Caco-2 (cell line): ENCODE measurements at regions of chr5 and their contacts with region 1.

Region 1: DNA sequence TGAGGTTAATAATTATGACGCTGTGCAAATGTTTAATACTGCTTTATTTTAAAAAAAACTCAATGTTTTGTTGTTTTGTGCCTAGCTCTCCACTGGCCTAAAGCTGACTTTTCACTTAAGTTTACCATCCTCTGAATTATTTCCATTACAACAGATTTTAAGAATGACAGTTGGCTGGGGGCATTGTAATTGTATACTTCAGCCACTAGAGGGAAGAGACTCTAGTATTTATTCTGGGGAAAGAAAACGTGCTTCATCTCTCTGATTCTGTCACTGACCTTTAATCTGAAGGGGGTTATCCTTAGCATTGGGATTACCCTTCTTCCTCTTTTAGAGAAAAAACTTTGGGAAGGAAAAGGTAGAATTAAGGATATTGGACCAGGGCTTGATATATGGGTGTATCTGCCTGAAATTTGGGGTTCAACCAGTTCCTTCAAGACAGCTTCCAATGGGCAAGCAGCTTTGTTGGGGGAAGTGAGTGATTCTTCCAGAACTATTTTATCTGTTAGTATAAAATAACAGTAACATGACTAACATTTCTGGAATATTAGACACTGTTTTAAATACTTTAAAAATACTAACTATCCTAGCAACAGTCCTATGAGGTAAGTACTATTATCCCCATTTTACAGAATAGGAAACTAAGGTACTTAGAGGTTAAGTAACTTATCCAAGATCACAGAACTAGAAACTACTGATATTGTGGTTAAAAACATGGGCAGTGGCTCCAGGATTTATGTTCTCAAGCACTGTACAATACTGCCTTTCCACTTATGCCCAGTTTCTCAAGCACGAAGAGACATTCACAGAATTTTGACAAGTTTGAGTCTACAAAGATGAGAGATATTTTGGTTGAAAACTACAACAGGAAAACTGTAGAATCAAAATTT is 208.4 kb downstream of the CD180 start:
- DNase-seq: no peak
- H3K4me3 ChIP-seq: no peak overlapping the region
- H3K4me3 Mint-ChIP-seq: no peak overlapping the region
- H3K27ac Mint-ChIP-seq: no peak overlapping the region
- H3K4me1 ChIP-seq: peaks cover 9% of the 10 kb centered on the region
- H3K4me1 Mint-ChIP-seq: peaks cover 27% of the 10 kb centered on the region
- H3K27me3 ChIP-seq: no peaks in the 10 kb centered on the region
- H3K27me3 Mint-ChIP-seq: no peaks in the 10 kb centered on the region
- CTCF ChIP-seq: peak; percentile 78 to 79

Region 2: GRCh38 chr5:67073045-67073680 is 85.0 kb after region 1 on chr5:
- CTCF ChIA-PET with region 1: no interaction called
- POLR2A ChIA-PET with region 1: no interaction called
- intact Hi-C with region 1: no loop called
- DNase-seq: no peak
- H3K4me3 ChIP-seq: no peak overlapping the region
- H3K4me3 Mint-ChIP-seq: no peak overlapping the region
- H3K27ac Mint-ChIP-seq: no peak overlapping the region
- H3K4me1 ChIP-seq: 0 out of 2 replicates have a peak, but pooled peaks cover 3% of the 10 kb centered on the region
- H3K4me1 Mint-ChIP-seq: peaks cover 6% of the 10 kb centered on the region
- H3K27me3 ChIP-seq: no peaks in the 10 kb centered on the region
- H3K27me3 Mint-ChIP-seq: no peaks in the 10 kb centered on the region
- CTCF ChIP-seq: no peak

Region 3: DNA sequence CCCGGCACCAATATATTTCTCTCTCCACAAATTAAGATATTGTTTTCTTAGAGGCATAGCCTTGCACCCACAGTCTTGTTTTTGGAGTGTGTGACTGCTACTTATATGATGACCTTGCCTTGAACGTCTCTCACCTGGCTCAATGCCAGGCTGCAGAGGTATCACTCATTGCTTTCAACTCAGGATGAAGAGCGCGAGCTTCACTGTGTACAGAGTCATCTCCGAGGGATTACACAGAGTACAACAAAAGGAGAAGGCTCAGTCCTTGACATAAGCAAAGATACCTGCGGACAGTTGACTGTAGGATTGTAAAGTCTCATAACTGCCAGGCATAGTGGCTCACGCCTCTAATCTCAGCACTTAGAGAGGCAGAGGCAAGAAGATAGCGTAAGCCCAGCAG is 154.6 kb after region 1 on chr5:
- CTCF ChIA-PET with region 1: no interaction called
- POLR2A ChIA-PET with region 1: no interaction called
- intact Hi-C with region 1: loop called (anchors 2 kb)
- DNase-seq: no peak
- H3K4me3 ChIP-seq: no peak overlapping the region
- H3K4me3 Mint-ChIP-seq: no peak overlapping the region
- H3K27ac Mint-ChIP-seq: no peak overlapping the region
- H3K4me1 ChIP-seq: peaks cover 18% of the 10 kb centered on the region
- H3K4me1 Mint-ChIP-seq: peaks cover 14% of the 10 kb centered on the region
- H3K27me3 ChIP-seq: no peaks in the 10 kb centered on the region
- H3K27me3 Mint-ChIP-seq: no peaks in the 10 kb centered on the region
- CTCF ChIP-seq: no peak